ENCODE measurements at regions of chrX and their contacts with region 1.

Region 1: DNA sequence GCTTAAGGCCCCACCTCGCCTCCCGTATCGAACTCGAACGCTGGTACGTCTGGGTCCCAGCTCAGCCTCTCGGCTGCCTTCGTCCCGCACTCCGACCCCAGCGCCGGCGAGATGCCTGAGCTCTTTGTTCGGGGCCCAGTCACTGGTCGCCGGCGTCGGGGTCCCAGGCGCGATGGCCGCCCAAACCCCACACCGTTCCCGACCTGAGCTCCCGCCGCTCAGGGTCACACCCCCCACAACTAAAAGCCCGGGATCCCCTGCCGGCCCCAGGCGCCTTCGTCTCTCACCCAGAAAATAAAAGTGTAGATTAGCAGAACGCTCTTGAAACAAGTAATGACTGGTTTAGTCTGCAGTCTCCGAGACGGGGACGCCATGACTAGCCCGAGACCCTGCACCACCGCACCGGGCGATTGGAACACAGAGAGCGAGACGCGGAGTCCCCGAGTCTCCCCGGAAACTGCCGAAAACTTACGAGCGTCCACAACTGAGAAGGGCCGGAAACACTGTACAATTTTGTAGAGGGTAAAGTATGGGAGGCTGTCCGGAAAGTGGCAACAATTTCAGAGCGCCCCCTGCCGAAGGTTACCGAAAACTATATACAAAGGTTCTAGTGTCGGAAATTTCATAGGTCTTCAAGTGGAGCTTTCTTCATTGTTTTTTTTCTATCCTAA is at the start of gene TSPAN6:
- DNase-seq: peak; percentile 87 to 91
- ATAC-seq: peak; percentile 100
- H3K4me3 ChIP-seq: peak within 1 kb of the TSS; percentile 79
- H3K27ac ChIP-seq: peak within 1 kb of the TSS; percentile 81 to 92
- H3K4me1 ChIP-seq: peaks cover 8% of the 10 kb centered on the region; the same call in 2 of the 3 replicates
- CTCF ChIP-seq: peak; percentile 69
- EP300 ChIP-seq: no peak
- POLR2A ChIP-seq: peak; percentile 54
- RAD21 ChIP-seq: peak; percentile 31 to 45; a peak in 2 of 5 replicates
- polyA plus RNA-seq, gene TSPAN6: 61.4 and 71.1 TPM in 2 replicates

Region 2: DNA sequence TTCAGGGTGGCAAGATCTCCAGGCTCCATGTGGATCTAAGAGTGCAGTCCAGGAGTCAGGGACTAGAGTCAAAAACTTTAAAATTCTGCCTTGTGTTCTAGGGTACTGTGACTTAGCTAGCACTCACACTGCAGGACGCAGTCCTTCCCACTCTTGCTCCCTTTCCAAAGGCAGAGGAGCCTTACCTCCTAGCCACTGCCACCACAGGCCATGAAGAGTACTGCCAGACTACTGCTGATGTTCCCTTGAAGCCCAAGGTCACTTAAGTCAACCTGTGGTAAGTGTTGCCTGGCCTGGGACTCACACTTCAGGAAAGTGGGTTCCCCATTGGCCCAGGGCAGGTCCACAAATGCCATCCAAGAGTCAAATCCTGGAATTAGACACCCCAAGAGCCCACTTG is 858.5 kb before region 1 on chrX:
- CTCF ChIA-PET with region 1: no interaction called
- POLR2A ChIA-PET with region 1: no interaction called
- DNase-seq: peak in 1 of 2 experiments; percentile 0
- ATAC-seq: no peak
- H3K4me3 ChIP-seq: no peak overlapping the region
- H3K27ac ChIP-seq: no peak overlapping the region
- H3K4me1 ChIP-seq: no peaks in the 10 kb centered on the region
- CTCF ChIP-seq: no peak
- EP300 ChIP-seq: no peak
- POLR2A ChIP-seq: no peak
- RAD21 ChIP-seq: no peak

Region 3: GRCh38 chrX:100512471-100512870 is 124.0 kb before region 1 on chrX:
- CTCF ChIA-PET with region 1: interaction called, 13 read pairs
- POLR2A ChIA-PET with region 1: no interaction called
- DNase-seq: peak; percentile 1 to 25
- ATAC-seq: no peak
- H3K4me3 ChIP-seq: no peak overlapping the region
- H3K27ac ChIP-seq: no peak overlapping the region
- H3K4me1 ChIP-seq: no peaks in the 10 kb centered on the region
- CTCF ChIP-seq: peak; percentile 50
- EP300 ChIP-seq: no peak
- POLR2A ChIP-seq: no peak
- RAD21 ChIP-seq: peak; percentile 43 to 57; a peak in 2 of 5 replicates

Region 4: DNA sequence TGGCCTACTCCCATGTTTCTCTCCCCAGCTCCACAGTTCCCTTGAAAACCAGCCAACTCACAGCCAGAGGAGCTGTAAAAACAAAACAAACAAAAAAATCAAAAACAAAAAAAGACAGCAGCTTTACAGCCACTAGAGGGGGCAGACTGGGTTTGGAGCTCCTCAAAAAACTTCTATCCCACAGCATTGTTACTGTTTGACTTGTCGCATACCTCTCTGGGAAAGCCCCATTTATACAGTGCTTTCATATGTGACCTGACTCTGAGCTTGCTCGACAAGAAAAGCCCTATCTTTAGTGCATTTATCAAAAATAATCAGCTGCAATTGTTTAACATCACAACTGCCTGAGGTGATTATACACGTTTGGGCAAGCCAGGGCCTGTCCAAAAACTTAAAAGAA is 21.5 kb before region 1 on chrX:
- CTCF ChIA-PET with region 1: interaction called, 19 read pairs
- POLR2A ChIA-PET with region 1: interaction called, 14 read pairs
- DNase-seq: peak; percentile 13 to 60
- ATAC-seq: peak; percentile 74 to 82; a peak in 5 of 6 replicates
- H3K4me3 ChIP-seq: no peak overlapping the region
- H3K27ac ChIP-seq: peak overlapping the region; percentile 40 to 63; a peak in 3 of 6 replicates
- H3K4me1 ChIP-seq: peaks cover 3% of the 10 kb centered on the region; the same call in 1 of the 3 replicates
- CTCF ChIP-seq: peak; percentile 47
- EP300 ChIP-seq: no peak
- POLR2A ChIP-seq: no peak
- RAD21 ChIP-seq: peak in 1 of 2 experiments; percentile 41; a peak in 3 of 5 replicates

Region 5: DNA sequence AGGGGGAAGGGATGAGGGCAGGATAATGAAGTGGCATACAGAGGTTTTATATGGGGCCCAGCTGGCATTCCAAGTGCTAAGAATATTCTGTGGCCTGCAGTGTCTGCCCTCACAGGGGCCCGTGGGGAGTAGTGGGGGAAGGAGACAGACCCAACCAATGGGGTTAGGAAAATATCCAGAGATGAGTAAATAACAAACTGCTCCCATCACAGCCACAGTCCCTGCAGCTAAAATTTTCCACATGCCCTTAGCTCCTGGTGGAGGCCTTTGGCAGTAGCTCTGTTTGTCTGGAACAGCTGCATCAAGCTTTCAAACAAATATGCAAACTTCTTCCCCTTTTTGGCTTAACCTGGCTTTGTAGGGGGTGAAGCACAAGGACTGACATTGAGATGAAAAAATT is 10.6 kb after region 1 on chrX:
- CTCF ChIA-PET with region 1: interaction called, 11 read pairs
- POLR2A ChIA-PET with region 1: interaction called, 4 read pairs
- DNase-seq: no peak
- ATAC-seq: no peak
- H3K4me3 ChIP-seq: no peak overlapping the region
- H3K27ac ChIP-seq: peak overlapping the region; percentile 13 to 59; a peak in 4 of 6 replicates
- H3K4me1 ChIP-seq: peaks cover 69% of the 10 kb centered on the region
- CTCF ChIP-seq: no peak
- EP300 ChIP-seq: no peak
- POLR2A ChIP-seq: no peak
- RAD21 ChIP-seq: no peak

Measured in A549 (cell line).